Prostate gland (tissue), 2 donors: ENCODE measurements at regions of chr1 and their contacts with region 1.

Region 1: GRCh38 chr1:201408176-201408833 is 9.2 kb upstream of the LAD1 start:
- DNase-seq: peak; percentile 83
- H3K4me3 ChIP-seq: no peak overlapping the region
- H3K27ac ChIP-seq: no peak overlapping the region
- H3K4me1 ChIP-seq: no peaks in the 10 kb centered on the region
- H3K27me3 ChIP-seq: no peaks in the 10 kb centered on the region
- CTCF ChIP-seq: peak; percentile 88 to 93 (median 90)
- POLR2A ChIP-seq: no peak

Region 2: DNA sequence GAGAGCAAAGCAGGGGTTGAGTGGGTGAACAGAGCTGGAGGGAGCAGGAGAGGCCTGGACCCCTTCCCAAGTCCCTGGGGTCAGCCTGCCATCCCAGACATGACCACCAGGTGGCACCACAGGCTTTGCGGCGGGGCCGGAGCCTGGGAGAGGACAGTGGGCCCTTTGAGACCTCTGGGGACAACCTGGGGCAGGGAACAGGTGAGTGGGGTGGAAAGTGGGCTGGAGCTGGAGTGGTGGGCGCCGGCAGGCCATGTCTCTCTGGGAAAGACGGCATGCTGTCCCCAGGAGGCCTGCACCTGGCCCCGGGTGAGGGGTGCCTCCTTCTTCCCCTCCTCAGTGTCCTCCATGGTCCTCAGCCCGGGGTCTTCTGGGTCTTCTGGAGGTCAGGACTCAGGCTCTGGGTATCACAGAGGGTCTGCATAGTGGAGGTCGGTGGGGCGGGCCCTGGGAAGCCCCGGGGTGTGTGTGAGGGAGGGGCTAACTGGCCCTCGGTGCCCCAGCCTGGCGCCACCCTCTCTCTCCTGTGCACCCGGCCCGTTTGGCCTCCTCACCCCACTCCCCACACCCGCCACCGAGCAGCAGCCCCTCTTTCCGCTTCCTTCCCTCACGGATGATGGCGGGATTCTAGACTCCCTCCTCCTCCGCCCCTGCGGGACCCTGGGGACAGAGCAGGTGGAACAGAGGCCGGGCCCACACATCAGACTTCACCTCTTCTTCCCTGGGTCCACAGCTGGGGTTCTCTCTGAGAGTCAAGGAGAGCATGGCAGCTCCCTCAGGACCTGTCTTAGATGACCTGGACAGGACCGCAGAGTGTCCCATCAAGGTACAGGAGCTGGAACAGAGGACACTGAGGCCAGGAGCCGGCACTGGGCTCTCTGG is 153.4 kb before region 1 on chr1:
- intact Hi-C with region 1: loop called (anchors 5 kb)
- DNase-seq: peak; percentile 51
- H3K4me3 ChIP-seq: no peak overlapping the region
- H3K27ac ChIP-seq: no peak overlapping the region
- H3K4me1 ChIP-seq: no peaks in the 10 kb centered on the region
- H3K27me3 ChIP-seq: no peaks in the 10 kb centered on the region
- CTCF ChIP-seq: peak; percentile 97 to 99 (median 99)
- POLR2A ChIP-seq: no peak

Region 3: GRCh38 chr1:201348211-201348566 is 60.1 kb before region 1 on chr1:
- intact Hi-C with region 1: loop called (anchors 5 kb)
- DNase-seq: no peak
- H3K4me3 ChIP-seq: no peak overlapping the region
- H3K27ac ChIP-seq: no peak overlapping the region
- H3K4me1 ChIP-seq: peaks cover 3% of the 10 kb centered on the region
- H3K27me3 ChIP-seq: no peaks in the 10 kb centered on the region
- CTCF ChIP-seq: peak in 2 of 4 experiments; percentile 36 to 48
- POLR2A ChIP-seq: no peak